ENCODE measurements at regions of chr15 and their contacts with region 1.

Region 1: GRCh38 chr15:91246998-91247397 is 146.9 kb downstream of the SV2B start:
- DNase-seq: no peak
- ATAC-seq: no peak
- H3K4me3 ChIP-seq: no peak overlapping the region
- H3K27ac ChIP-seq: no peak overlapping the region
- H3K4me1 ChIP-seq: no peaks in the 10 kb centered on the region
- CTCF ChIP-seq: no peak
- EP300 ChIP-seq: no peak
- POLR2A ChIP-seq: no peak
- RAD21 ChIP-seq: no peak

Region 2: GRCh38 chr15:91258425-91258779 is 11.4 kb after region 1 on chr15:
- CTCF ChIA-PET with region 1: interaction called, 14 read pairs
- POLR2A ChIA-PET with region 1: no interaction called
- DNase-seq: peak; percentile 16 to 28
- ATAC-seq: peak; percentile 68 to 79; a peak in 5 of 6 replicates
- H3K4me3 ChIP-seq: no peak overlapping the region
- H3K27ac ChIP-seq: no peak overlapping the region
- H3K4me1 ChIP-seq: no peaks in the 10 kb centered on the region
- CTCF ChIP-seq: no peak
- EP300 ChIP-seq: no peak
- POLR2A ChIP-seq: no peak
- RAD21 ChIP-seq: no peak

Region 3: DNA sequence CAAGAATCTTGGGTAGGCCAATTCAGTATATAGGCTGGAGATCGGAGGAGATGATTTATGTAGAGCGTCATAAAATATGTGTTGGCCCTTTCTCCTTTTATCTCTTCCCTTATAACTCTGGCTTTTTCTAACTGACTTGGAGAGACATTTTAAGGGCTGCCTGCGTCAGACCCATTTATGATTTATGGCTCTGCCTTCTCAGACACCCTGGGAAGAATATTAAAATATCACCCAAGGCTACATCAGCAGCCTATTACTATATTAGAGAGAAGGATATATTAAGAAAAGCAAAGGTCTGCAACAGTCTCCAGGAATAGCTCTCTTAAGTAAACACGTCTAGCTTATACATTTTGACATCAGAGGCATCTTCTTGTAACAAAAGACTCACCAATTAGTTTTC is 32.5 kb after region 1 on chr15:
- CTCF ChIA-PET with region 1: no interaction called
- POLR2A ChIA-PET with region 1: no interaction called
- DNase-seq: no peak
- ATAC-seq: no peak
- H3K4me3 ChIP-seq: no peak overlapping the region
- H3K27ac ChIP-seq: no peak overlapping the region
- H3K4me1 ChIP-seq: no peaks in the 10 kb centered on the region
- CTCF ChIP-seq: no peak
- EP300 ChIP-seq: no peak
- POLR2A ChIP-seq: no peak
- RAD21 ChIP-seq: no peak

Region 4: DNA sequence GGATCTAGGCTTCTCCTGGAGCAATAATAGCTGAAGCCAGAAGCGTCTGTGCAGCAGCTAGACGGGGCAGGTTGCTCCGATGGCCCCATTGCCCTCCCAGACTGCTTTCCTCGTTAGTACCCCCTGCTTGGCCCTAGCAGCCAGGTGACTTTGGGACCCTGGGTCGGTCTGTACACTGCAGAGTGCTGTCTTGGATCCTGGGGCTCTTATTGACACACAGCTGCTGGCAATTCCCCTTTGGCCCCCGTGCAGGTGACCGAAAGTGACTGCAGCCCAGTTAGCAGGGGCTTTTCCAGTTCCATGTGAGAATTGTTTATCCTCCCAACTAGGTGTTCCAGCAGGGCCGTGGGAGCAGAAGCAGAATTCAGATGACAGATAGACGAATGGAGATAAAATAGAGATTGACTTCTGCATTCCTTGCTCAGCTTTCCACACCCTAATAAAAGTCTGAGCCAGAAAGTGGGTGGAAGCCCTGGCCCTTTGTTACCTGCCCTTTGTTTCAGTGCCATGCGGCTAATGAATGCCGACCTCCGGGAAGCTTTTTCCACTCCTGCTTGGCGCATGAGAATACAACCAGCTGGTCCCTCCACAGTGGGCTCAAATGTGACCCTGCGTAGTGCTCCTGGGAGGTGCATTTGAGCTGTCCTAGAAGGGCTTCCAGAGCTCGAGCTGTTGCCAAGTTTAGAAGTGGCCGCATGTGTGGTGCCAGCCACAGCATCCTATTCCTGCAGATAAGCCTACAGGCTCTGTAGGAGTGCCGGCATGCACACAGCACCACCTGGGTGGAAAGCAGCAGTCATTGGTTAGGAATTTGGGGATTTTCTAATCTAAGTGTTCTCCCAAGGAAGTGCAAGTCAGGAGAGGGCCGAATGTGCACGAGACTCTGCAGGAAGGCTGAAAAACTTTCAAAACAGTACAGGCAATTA is 700.9 kb after region 1 on chr15:
- CTCF ChIA-PET with region 1: no interaction called
- POLR2A ChIA-PET with region 1: no interaction called
- DNase-seq: peak; percentile 55 to 67
- ATAC-seq: peak; percentile 73 to 81
- H3K4me3 ChIP-seq: no peak overlapping the region
- H3K27ac ChIP-seq: peak overlapping the region; percentile 6 to 70; a peak in 3 of 6 replicates
- H3K4me1 ChIP-seq: peaks cover 46% of the 10 kb centered on the region
- CTCF ChIP-seq: no peak
- EP300 ChIP-seq: no peak
- POLR2A ChIP-seq: no peak
- RAD21 ChIP-seq: 0 out of 5 replicates have a peak, but pooled peaks of 1 of the 2 experiments have one; percentile 7